Head of caudate nucleus (tissue), 42 donors: ENCODE measurements at regions of chr9 and their contacts with region 1.

Region 1: DNA sequence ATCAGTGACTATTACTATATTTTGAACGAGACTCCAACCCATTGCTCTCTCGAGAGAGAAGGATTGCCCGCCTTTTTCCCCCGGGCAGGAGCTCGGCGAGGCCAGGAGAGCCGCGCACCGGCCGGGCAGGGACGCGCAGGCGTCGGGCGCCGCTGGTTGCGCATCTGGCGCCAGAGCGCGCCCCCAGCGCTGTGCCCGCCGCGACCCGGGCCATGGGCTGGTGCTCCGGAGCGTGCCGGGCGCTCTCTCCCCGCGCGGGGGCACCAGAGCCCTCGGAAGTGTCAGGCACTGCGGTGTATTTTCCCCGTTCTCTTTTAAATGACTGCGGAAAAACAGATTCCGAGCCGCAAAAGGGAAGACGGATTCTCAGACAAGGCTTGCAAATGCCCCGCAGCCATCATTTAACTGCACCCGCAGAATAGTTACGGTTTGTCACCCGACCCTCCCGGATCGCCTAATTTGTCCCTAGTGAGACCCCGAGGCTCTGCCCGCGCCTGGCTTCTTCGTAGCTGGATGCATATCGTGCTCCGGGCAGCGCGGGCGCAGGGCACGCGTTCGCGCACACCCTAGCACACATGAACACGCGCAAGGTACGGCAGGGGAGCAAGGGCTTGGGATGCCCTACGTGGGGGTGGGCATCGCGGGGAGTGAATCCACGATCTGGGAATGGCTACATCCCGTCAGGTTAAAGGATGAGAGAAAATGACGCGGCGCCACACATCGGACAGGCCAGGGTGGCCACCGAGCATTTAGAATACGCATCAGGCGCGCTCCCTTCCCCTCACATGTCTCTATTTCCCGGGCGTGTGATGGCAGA is 1.1 kb upstream of the NTRK2 start:
- DNase-seq: peak; percentile 80 to 96 (median 91)

Region 2: DNA sequence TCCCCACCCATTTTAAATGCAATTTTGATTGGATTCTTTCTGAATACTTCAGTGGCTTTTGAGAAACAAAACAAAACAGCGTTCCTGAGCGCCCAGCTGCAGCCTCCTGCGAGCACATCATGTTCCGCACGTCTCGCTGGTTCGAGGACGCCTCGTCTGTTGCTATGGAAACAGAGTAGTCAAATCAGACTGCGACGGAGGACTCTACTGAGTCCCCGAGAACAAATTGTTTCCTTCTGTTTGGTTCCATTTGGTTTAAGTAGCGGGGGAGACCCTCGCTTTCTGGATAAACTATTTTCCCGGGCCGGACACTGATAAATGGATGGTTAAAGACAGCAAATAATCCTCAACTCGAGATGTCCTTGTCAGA is 396.9 kb before region 1 on chr9:
- intact Hi-C with region 1: no loop called
- DNase-seq: peak; percentile 50 to 92 (median 78)

Region 3: DNA sequence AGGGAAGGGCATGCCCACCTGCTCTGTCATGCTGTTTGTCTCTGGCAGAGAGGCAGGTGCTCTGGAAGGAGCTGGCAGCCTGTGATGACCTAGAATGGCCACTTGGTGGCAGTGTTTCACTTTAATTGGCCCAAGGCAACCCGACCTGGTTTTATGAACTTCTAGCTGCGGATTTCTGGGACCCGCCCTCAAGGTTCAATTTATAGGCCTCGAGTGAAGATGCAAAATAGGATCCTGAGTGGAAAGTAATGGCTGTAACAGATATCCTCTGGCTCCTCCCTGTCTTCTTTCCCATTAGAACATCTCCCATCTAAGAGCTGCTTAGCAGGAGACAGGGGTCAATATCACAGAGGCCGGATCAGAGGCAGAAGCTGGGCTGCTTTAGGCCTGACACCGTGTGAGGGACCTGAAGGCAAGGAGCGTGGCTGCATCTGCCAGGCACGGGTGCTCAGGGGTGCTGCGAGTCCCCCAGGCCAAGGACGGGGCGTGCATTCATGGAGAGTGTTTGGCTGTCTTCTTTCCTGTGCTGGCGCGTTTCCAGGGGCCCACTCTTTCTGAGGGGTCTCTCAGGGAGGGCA is 271.2 kb before region 1 on chr9:
- intact Hi-C with region 1: loop called (anchors 10 kb)
- DNase-seq: peak; percentile 12 to 89 (median 77)

Region 4: DNA sequence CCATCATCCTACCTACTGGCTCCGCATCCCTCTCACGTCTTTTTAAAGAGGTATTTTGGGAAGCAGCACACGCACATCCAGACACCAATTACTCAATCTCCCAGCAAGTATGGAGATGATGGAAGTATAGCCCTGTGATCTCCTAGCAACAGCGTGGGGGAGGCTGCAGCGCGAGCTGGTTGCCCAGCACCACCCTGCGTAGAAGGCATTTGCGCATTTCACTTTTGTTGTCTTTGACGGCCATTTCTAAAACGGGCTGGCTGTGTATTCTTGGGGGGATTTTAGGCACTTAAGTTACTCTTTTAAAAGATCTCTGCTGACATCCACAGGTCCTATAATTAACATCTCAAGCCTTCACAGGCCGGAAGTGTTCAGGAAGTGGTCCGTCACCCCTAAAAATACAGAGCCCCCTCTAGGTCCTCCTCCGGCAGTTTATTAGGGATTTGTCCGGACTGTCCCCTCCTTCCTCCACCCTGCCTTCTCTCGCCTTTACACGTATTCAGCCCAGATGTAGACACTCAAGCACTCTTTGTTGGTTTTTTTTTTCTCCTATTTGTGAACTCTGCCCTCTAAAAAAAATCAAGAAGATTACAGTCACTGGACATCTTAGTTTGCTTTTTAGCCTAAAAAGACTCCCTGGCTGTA is 372.5 kb after region 1 on chr9:
- intact Hi-C with region 1: loop called (anchors 5 kb)
- DNase-seq: peak; percentile 70 to 94 (median 84)

Region 5: DNA sequence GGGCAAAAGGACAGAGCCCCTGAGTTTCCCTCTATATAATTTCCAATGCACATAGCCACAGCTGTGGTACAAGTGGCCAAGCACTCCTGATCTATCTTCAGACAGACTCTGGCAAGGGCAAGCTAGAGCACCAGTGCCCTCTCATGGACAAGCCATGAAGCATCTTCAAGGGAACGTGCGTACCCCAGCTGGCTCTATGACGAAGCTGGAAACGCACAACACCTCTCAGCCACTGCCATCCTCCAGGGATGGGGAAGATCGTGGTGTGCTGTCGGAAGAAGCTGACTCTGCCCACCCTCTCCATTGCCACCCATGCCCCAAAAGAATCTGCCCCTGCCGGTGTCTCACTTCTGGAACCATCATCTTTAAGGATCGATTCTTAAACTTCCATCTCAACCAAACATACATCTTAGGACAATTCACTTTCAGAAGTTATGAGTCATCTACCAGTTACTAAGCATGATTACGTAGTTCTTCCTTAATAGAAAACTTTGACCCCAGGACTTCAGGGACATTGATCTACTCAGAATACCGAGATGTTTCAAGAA is 590.5 kb after region 1 on chr9:
- intact Hi-C with region 1: loop called (anchors 5 kb)
- DNase-seq: peak; percentile 62 to 92 (median 83)